Colonic mucosa (tissue), 4 donors: ENCODE measurements at regions of chr7 and their contacts with region 1.

Region 1: DNA sequence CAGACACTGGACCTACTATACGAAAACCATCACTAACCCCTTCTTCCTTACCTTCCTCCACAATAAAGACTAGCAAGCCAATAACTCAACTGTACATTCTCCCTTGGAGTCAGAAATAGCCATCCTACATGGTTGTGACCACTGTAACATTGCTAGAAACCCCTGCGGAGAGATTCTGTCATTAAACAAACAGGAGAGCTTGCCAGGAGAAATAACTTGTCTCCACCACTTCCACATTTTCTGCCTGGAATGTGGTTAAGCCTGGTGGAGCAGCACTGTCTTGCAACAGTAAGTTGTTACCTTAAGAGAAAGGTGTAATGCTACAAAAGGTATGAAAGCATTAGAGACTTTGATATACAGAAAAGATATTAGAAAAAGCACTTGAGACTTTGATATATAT is 45.8 kb downstream of the THSD7A start:
- DNase-seq: no peak
- H3K4me3 ChIP-seq: no peak overlapping the region
- H3K27ac ChIP-seq: no peak overlapping the region
- H3K4me1 ChIP-seq: no peaks in the 10 kb centered on the region
- H3K27me3 ChIP-seq: no peaks in the 10 kb centered on the region
- CTCF ChIP-seq: no peak

Region 2: GRCh38 chr7:11358637-11359036 is 427.5 kb before region 1 on chr7:
- intact Hi-C with region 1: no loop called
- DNase-seq: no peak
- H3K4me3 ChIP-seq: no peak overlapping the region
- H3K27ac ChIP-seq: no peak overlapping the region
- H3K4me1 ChIP-seq: no peaks in the 10 kb centered on the region
- H3K27me3 ChIP-seq: no peaks in the 10 kb centered on the region
- CTCF ChIP-seq: no peak

Region 3: GRCh38 chr7:11579141-11579540 is 207.0 kb before region 1 on chr7:
- intact Hi-C with region 1: no loop called
- DNase-seq: no peak
- H3K4me3 ChIP-seq: no peak overlapping the region
- H3K27ac ChIP-seq: no peak overlapping the region
- H3K4me1 ChIP-seq: no peaks in the 10 kb centered on the region
- H3K27me3 ChIP-seq: no peaks in the 10 kb centered on the region
- CTCF ChIP-seq: no peak

Region 4: DNA sequence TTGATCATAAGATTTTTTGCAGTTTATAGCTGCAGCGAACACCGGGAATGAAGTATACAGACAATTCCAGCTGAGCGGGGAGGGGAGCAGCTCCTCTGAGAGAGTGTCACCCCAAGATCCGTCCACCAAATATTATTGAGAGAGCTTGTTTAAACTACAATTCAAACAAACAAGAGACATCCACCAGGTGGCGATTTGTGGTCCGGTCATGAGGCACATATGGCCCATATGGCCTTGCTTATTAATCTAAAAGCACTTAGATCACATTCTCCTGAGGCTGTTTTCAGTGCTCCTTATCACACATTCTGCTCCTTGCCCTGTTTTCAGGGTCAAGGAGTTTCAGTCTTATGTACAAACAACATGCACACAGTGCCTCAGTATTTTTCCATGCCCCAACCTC is 37.3 kb before region 1 on chr7:
- intact Hi-C with region 1: loop called (anchors 2 kb)
- DNase-seq: no peak
- H3K4me3 ChIP-seq: no peak overlapping the region
- H3K27ac ChIP-seq: no peak overlapping the region
- H3K4me1 ChIP-seq: no peaks in the 10 kb centered on the region
- H3K27me3 ChIP-seq: no peaks in the 10 kb centered on the region
- CTCF ChIP-seq: no peak

Region 5: GRCh38 chr7:12674849-12675248 is 888.7 kb after region 1 on chr7:
- intact Hi-C with region 1: no loop called
- DNase-seq: peak; percentile 51
- H3K4me3 ChIP-seq: no peak overlapping the region
- H3K27ac ChIP-seq: no peak overlapping the region
- H3K4me1 ChIP-seq: no peaks in the 10 kb centered on the region
- H3K27me3 ChIP-seq: no peaks in the 10 kb centered on the region
- CTCF ChIP-seq: peak; percentile 30